ENCODE measurements at regions of chr13 and their contacts with region 1.

Region 1: DNA sequence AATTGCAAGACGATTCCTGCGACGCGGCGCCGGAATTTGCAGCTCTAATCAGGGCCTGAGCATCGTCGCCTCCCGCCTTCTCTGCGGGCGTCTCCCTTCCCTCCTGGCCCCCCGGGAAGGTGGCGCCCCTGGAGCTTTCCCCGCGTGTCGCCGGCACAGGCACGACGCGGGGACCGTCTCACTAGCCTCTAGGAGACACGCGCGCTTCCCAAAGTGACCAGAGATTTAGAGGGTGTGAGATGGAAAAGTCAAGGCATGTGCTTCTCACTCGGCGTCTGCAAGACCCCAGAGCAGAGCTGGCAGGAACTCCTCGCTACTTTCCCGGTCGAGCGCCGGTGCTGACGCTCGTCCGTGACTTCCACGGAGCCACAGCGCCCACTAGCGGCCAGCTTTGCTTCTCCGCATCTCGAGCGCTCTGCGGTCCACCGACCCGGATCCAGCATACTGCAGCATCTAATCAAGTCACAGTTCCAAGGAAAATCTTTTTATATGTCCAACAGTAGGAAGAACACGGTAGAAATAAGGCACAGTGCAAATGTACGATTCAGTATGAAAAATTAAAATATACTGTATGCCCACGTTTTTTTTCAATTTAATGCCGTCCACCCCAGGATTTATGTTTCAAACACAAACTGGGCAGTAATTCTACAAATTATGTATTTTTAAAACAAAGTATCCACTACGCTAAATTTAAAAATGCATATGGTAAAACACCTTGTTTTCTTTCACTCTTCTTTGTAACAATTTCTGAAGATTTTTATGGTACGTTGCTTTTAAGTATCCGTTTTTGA is 977 bp upstream of the EFNB2 start:
- DNase-seq: peak; percentile 75 to 96 (median 90)
- ATAC-seq: peak; percentile 44
- H3K4me3 ChIP-seq: peak overlapping the region; percentile 76 to 83
- H3K4me3 Mint-ChIP-seq: peak overlapping the region; percentile 95
- H3K27ac ChIP-seq: no peak overlapping the region
- H3K27ac Mint-ChIP-seq: peak overlapping the region; percentile 45
- H3K4me1 ChIP-seq: peaks cover 15% of the 10 kb centered on the region
- H3K4me1 Mint-ChIP-seq: peaks cover 20% of the 10 kb centered on the region
- H3K27me3 ChIP-seq: peaks cover 15% of the 10 kb centered on the region in 2 experiments
- H3K27me3 Mint-ChIP-seq: peaks cover 22% of the 10 kb centered on the region
- CTCF ChIP-seq: peak; percentile 89

Region 2: DNA sequence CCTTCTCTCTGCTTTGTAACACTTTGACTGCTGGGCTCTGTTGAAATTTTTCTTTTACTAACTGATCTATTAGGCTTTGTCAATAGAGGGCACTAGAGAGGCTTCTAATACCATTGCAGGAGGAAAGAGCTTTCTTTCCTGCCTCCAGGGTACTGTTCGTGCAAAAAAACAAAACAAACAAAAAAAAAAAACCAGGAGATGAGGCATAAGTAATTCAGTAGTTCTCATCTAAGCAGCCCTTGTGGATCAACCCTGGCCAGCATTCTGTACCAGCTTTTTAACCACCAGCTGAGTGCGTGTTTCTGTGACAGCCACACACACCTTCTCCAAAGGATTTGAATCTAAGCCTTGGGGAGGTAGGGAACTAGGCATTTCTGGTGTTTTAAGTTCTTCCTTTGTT is 1762.7 kb before region 1 on chr13:
- CTCF ChIA-PET with region 1: no interaction called
- POLR2A ChIA-PET with region 1: no interaction called
- intact Hi-C with region 1: loop called (anchors 2 to 5 kb)
- DNase-seq: peak in 2 of 9 experiments; percentile 15 to 45
- ATAC-seq: no peak
- H3K4me3 ChIP-seq: no peak overlapping the region
- H3K4me3 Mint-ChIP-seq: no peak overlapping the region
- H3K27ac ChIP-seq: no peak overlapping the region
- H3K27ac Mint-ChIP-seq: no peak overlapping the region
- H3K4me1 ChIP-seq: peaks cover 11% of the 10 kb centered on the region
- H3K4me1 Mint-ChIP-seq: peaks cover 14% of the 10 kb centered on the region
- H3K27me3 ChIP-seq: no peaks in the 10 kb centered on the region
- H3K27me3 Mint-ChIP-seq: no peaks in the 10 kb centered on the region
- CTCF ChIP-seq: peak; percentile 56

Region 3: GRCh38 chr13:105410602-105411001 is 1125.8 kb before region 1 on chr13:
- CTCF ChIA-PET with region 1: interaction called, 3 read pairs
- POLR2A ChIA-PET with region 1: no interaction called
- intact Hi-C with region 1: loop called in 1 of 2 experiments (anchors 10 kb)
- DNase-seq: peak in 4 of 9 experiments; percentile 2 to 27 (median 14)
- ATAC-seq: no peak
- H3K4me3 ChIP-seq: no peak overlapping the region
- H3K4me3 Mint-ChIP-seq: no peak overlapping the region
- H3K27ac ChIP-seq: no peak overlapping the region
- H3K27ac Mint-ChIP-seq: no peak overlapping the region
- H3K4me1 ChIP-seq: no peaks in the 10 kb centered on the region
- H3K4me1 Mint-ChIP-seq: no peaks in the 10 kb centered on the region
- H3K27me3 ChIP-seq: no peaks in the 10 kb centered on the region
- H3K27me3 Mint-ChIP-seq: no peaks in the 10 kb centered on the region
- CTCF ChIP-seq: no peak

Region 4: DNA sequence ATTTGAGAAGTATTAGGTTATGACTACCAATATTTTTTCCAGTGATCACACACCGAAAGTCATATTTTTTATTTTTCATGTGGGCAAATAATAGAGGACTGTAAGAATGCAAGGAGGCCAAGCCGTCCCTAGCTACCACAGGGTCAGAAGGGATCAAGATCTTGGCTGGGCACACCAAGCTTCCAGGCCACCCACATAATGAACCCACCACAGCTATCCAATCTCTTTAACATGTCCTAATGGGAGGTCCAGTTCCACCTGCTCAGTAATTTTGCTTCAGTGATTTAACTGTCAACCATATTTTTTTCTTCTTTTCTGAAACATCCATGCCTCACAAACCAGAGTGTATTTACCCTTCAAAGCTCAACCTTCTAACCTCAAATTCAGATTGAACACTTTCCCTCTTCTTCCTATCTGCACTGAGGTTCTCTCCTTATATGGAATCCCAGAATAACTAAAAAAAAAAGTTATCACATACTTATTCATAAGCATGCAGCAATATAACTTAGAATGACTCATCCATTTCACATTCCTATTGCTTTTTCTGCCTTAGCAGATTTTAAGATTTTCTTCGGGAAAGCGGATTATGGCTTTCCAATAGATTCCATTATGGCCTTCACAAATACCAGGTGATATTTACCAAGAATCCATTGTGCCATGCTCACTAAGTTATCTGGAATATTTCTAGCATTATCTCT is 19.3 kb after region 1 on chr13:
- CTCF ChIA-PET with region 1: interaction called, 18 read pairs
- POLR2A ChIA-PET with region 1: no interaction called
- intact Hi-C with region 1: no loop called
- DNase-seq: no peak
- ATAC-seq: no peak
- H3K4me3 ChIP-seq: no peak overlapping the region
- H3K4me3 Mint-ChIP-seq: no peak overlapping the region
- H3K27ac ChIP-seq: no peak overlapping the region
- H3K27ac Mint-ChIP-seq: no peak overlapping the region
- H3K4me1 ChIP-seq: no peaks in the 10 kb centered on the region
- H3K4me1 Mint-ChIP-seq: peaks cover 57% of the 10 kb centered on the region
- H3K27me3 ChIP-seq: no peaks in the 10 kb centered on the region
- H3K27me3 Mint-ChIP-seq: no peaks in the 10 kb centered on the region
- CTCF ChIP-seq: no peak

Region 5: GRCh38 chr13:106619688-106620555 is 83.5 kb after region 1 on chr13:
- CTCF ChIA-PET with region 1: interaction called, 6 read pairs
- POLR2A ChIA-PET with region 1: no interaction called
- intact Hi-C with region 1: loop called in 1 of 2 experiments (anchors 5 kb)
- DNase-seq: peak in 5 of 9 experiments; percentile 19 to 57 (median 30)
- ATAC-seq: peak; percentile 76
- H3K4me3 ChIP-seq: no peak overlapping the region
- H3K4me3 Mint-ChIP-seq: no peak overlapping the region
- H3K27ac ChIP-seq: no peak overlapping the region
- H3K27ac Mint-ChIP-seq: no peak overlapping the region
- H3K4me1 ChIP-seq: no peaks in the 10 kb centered on the region
- H3K4me1 Mint-ChIP-seq: peaks cover 4% of the 10 kb centered on the region
- H3K27me3 ChIP-seq: no peaks in the 10 kb centered on the region
- H3K27me3 Mint-ChIP-seq: peaks cover 23% of the 10 kb centered on the region
- CTCF ChIP-seq: peak; percentile 68

Measured in CD8-positive, alpha-beta T cell (primary cell).